ENCODE measurements at regions of chr5 and their contacts with region 1.

Region 1: GRCh38 chr5:131109540-131110255 is 55.4 kb downstream of the HINT1 start:
- DNase-seq: no peak
- ATAC-seq: peak in 1 of 4 donors; percentile 65
- H3K4me3 ChIP-seq: no peak overlapping the region
- H3K27ac ChIP-seq: no peak overlapping the region
- H3K4me1 ChIP-seq: no peaks in the 10 kb centered on the region
- H3K27me3 ChIP-seq: no peaks in the 10 kb centered on the region
- CTCF ChIP-seq: peak; percentile 69

Region 2: DNA sequence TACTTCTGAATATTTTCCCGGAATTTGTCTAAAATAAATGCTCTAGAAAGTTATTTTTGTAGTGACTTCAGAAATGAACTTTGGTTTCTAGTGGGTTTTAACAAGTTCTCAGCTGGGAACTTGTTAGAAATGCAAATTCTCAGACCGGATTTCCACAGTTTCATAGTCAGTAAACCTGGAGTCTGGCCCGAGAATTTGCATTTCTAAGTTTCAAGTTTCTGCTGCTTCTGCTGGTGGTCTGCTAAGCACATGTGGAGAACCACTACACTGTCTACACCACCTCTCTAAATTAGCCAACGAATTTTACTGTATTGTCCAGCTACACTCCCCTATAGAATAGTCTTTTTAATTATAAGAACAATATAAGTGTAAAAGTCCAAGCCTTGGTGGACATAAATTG is 997.5 kb before region 1 on chr5:
- intact Hi-C with region 1: loop called in 1 of 2 experiments (anchors 10 kb)
- DNase-seq: no peak
- ATAC-seq: no peak
- H3K4me3 ChIP-seq: no peak overlapping the region
- H3K27ac ChIP-seq: no peak overlapping the region
- H3K4me1 ChIP-seq: no peaks in the 10 kb centered on the region
- H3K27me3 ChIP-seq: no peaks in the 10 kb centered on the region
- CTCF ChIP-seq: no peak

Region 3: GRCh38 chr5:131019111-131019974 is 90.4 kb before region 1 on chr5:
- intact Hi-C with region 1: no loop called
- DNase-seq: no peak
- ATAC-seq: no peak
- H3K4me3 ChIP-seq: no peak overlapping the region
- H3K27ac ChIP-seq: no peak overlapping the region
- H3K4me1 ChIP-seq: no peaks in the 10 kb centered on the region
- H3K27me3 ChIP-seq: no peaks in the 10 kb centered on the region
- CTCF ChIP-seq: no peak

Region 4: GRCh38 chr5:131064669-131065371 is 44.9 kb before region 1 on chr5:
- intact Hi-C with region 1: no loop called
- DNase-seq: no peak
- ATAC-seq: no peak
- H3K4me3 ChIP-seq: no peak overlapping the region
- H3K27ac ChIP-seq: no peak overlapping the region
- H3K4me1 ChIP-seq: no peaks in the 10 kb centered on the region
- H3K27me3 ChIP-seq: no peaks in the 10 kb centered on the region
- CTCF ChIP-seq: no peak

Region 5: GRCh38 chr5:131081374-131081773 is 28.3 kb before region 1 on chr5:
- intact Hi-C with region 1: no loop called
- DNase-seq: no peak
- ATAC-seq: peak in 1 of 4 donors; percentile 33
- H3K4me3 ChIP-seq: no peak overlapping the region
- H3K27ac ChIP-seq: no peak overlapping the region
- H3K4me1 ChIP-seq: no peaks in the 10 kb centered on the region
- H3K27me3 ChIP-seq: no peaks in the 10 kb centered on the region
- CTCF ChIP-seq: no peak